ENCODE measurements at regions of chr3 and their contacts with region 1.

Region 1: DNA sequence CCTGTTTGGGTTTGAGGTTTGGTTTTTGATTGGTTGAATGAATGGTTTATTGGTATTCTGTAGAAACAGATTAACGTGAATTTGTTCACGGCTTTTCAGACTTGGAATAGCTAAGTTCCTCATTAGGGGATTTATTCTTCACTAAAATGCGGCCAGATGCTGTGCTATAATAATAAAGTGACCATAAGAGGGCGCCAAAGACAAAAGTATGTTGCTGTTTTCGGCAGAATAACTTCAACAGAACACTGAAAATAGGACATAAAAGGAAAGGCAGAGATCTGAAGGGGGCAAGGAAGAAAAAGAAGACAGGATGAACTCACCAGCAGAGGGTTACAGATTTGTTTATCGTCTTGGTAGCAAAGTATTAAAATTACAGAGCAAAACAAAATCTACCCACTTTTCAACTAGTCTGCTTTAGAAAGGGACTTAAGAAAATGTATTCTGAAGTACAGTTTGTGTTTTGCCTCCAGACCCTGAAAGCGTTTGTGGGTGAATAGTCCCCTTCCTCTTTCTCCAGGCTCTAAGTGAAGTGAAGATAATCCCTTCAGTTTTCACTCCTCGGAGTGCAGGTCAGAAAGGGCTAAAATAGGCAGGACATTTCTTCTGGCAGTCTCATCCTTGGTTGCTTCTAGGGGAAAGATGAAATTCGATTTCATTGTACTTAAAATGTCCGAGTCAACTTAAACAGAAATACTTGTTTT is 147.6 kb downstream of the IL20RB start:
- DNase-seq: no peak
- H3K4me3 ChIP-seq: no peak overlapping the region
- H3K27ac ChIP-seq: no peak overlapping the region
- H3K4me1 ChIP-seq: peaks cover 9% of the 10 kb centered on the region
- H3K27me3 ChIP-seq: peaks cover 47% of the 10 kb centered on the region
- CTCF ChIP-seq: peak; percentile 74

Region 2: GRCh38 chr3:136720095-136720494 is 385.3 kb before region 1 on chr3:
- intact Hi-C with region 1: no loop called
- DNase-seq: no peak
- H3K4me3 ChIP-seq: no peak overlapping the region
- H3K27ac ChIP-seq: no peak overlapping the region
- H3K4me1 ChIP-seq: peaks cover 18% of the 10 kb centered on the region
- H3K27me3 ChIP-seq: no peaks in the 10 kb centered on the region
- CTCF ChIP-seq: no peak

Region 3: GRCh38 chr3:137032465-137033120 is 72.8 kb before region 1 on chr3:
- intact Hi-C with region 1: no loop called
- DNase-seq: peak; percentile 88
- H3K4me3 ChIP-seq: peak overlapping the region; percentile 63
- H3K27ac ChIP-seq: no peak overlapping the region
- H3K4me1 ChIP-seq: peaks cover 6% of the 10 kb centered on the region
- H3K27me3 ChIP-seq: peaks cover 38% of the 10 kb centered on the region
- CTCF ChIP-seq: peak; percentile 99

Region 4: GRCh38 chr3:137946345-137946973 is 841.0 kb after region 1 on chr3:
- intact Hi-C with region 1: loop called (anchors 10 kb)
- DNase-seq: peak; percentile 24
- H3K4me3 ChIP-seq: no peak overlapping the region
- H3K27ac ChIP-seq: no peak overlapping the region
- H3K4me1 ChIP-seq: no peaks in the 10 kb centered on the region
- H3K27me3 ChIP-seq: peaks cover 3% of the 10 kb centered on the region
- CTCF ChIP-seq: peak; percentile 69

Region 5: DNA sequence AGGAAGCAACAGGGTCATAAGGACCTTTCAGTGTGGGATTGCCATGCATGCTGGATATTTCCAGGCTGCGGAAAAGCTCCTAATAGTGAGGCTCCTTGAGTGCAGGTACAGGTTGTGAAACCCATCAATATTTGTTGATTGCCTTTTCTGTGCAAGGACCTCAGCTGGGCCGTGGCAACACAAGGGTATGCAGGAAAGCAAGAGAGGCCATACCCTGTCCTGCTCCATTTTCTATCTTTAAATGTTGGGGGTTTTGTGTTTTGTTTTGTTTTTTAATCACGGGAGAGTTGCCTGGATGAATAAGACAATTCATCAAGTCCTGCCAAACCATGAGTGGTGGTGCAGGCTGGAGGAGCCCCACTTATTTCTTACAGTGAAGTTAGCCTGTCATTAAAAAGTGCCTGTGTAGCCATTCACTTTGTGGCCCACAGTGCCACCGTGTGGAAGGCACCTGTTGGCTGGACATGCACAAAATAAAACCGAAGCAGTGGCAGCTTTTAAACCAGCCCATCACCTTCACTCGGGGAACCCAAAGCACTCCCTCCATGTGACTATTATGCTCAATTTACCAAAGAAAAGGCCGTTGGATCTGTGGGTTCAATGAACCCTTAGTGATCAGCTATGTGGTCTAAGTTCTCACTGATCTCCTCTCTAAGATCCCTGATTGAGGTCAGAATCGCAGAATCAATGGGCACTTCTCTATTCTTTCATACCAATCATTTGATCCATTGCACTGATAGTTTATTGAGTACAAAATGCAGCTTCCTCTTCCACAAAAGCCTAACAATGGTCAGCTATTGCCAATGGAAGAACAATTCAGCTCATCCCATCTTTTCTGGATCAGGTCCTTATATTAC is 946.7 kb after region 1 on chr3:
- intact Hi-C with region 1: loop called (anchors 10 kb)
- DNase-seq: peak; percentile 37
- H3K4me3 ChIP-seq: no peak overlapping the region
- H3K27ac ChIP-seq: no peak overlapping the region
- H3K4me1 ChIP-seq: peaks cover 28% of the 10 kb centered on the region
- H3K27me3 ChIP-seq: no peaks in the 10 kb centered on the region
- CTCF ChIP-seq: peak; percentile 72

Measured in left ventricle myocardium inferior (tissue), 1 donor.